ENCODE measurements at regions of chr14 and their contacts with region 1.

Region 1: DNA sequence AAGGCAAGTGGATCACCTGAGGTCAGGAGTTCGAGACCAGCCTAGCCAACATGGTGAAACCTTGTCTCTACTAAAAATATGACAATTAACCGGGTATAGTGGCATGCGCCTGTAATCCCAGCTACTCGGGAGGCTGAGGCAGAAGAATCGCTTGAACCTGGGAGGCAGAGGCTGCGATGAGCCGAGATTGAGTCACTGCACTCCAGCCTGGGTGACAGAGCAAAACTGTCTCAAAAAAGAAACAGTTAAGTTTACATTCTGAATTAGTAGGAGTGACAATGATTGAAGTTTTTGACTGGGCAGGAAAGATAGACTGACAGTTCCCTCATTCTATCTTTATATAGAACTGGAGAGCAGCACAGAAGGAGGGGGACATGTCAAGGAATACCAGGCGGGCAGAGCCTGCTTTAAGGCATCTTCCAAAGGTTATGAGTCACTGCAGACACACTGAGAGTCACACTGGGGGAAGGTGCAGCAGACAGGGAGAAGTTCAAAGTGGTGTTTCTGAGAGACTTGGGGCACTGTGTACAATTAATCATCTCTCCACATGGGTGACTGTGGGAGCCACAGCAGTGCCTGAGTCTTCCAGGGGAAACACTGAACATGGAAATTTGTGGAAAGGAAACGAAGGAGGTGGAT is 42.8 kb upstream of the RNASE3 start:
- DNase-seq: no peak
- H3K4me3 ChIP-seq: no peak overlapping the region
- H3K27ac ChIP-seq: no peak overlapping the region
- H3K4me1 ChIP-seq: no peaks in the 10 kb centered on the region
- H3K27me3 ChIP-seq: peaks cover under 1 to 11% of the 10 kb centered on the region in 2 experiments
- CTCF ChIP-seq: no peak
- POLR2A ChIP-seq: no peak

Region 2: GRCh38 chr14:20782280-20782890 is 66.0 kb before region 1 on chr14:
- CTCF ChIA-PET with region 1: interaction called, 3 read pairs
- POLR2A ChIA-PET with region 1: no interaction called
- dilution Hi-C with region 1: no loop called
- intact Hi-C with region 1: loop called (anchors 5 kb)
- DNase-seq: peak; percentile 56
- H3K4me3 ChIP-seq: peak overlapping the region in 1 of 3 experiments; percentile 35
- H3K27ac ChIP-seq: no peak overlapping the region
- H3K4me1 ChIP-seq: peaks cover 20% of the 10 kb centered on the region
- H3K27me3 ChIP-seq: peaks cover 2 to 9% of the 10 kb centered on the region in 2 experiments
- CTCF ChIP-seq: no peak
- POLR2A ChIP-seq: no peak

Region 3: GRCh38 chr14:20836668-20837338 is 11.6 kb before region 1 on chr14:
- CTCF ChIA-PET with region 1: interaction called, 10 read pairs
- POLR2A ChIA-PET with region 1: interaction called, 3 read pairs
- dilution Hi-C with region 1: no loop called
- intact Hi-C with region 1: no loop called
- DNase-seq: peak; percentile 47
- H3K4me3 ChIP-seq: no peak overlapping the region
- H3K27ac ChIP-seq: no peak overlapping the region
- H3K4me1 ChIP-seq: no peaks in the 10 kb centered on the region
- H3K27me3 ChIP-seq: no peaks in the 10 kb centered on the region
- CTCF ChIP-seq: peak; percentile 42 to 55
- POLR2A ChIP-seq: no peak

Region 4: DNA sequence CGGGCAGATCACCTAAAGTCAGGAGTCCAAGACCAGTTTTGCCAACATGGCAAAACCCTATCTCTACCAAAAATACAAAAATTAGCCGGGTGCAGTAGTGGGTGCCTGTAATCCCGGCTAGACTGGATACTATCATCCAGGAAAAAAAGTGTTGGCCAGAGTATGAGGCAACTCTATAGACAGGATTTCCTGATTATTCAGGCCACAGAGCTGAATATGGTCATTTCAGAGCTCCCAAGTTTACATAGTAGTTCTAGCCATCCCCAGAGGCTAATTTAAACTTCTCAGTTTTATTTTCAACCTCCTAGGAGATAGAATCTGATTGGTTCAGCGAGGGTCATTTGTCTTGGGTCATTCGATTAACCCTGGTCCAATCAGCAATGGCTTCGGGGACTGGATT is 438.7 kb after region 1 on chr14:
- CTCF ChIA-PET with region 1: no interaction called
- POLR2A ChIA-PET with region 1: no interaction called
- dilution Hi-C with region 1: no loop called
- intact Hi-C with region 1: no loop called
- DNase-seq: no peak
- H3K4me3 ChIP-seq: no peak overlapping the region
- H3K27ac ChIP-seq: no peak overlapping the region
- H3K4me1 ChIP-seq: no peaks in the 10 kb centered on the region
- H3K27me3 ChIP-seq: peaks cover 0 to 3% of the 10 kb centered on the region in 2 experiments
- CTCF ChIP-seq: no peak
- POLR2A ChIP-seq: no peak

Region 5: DNA sequence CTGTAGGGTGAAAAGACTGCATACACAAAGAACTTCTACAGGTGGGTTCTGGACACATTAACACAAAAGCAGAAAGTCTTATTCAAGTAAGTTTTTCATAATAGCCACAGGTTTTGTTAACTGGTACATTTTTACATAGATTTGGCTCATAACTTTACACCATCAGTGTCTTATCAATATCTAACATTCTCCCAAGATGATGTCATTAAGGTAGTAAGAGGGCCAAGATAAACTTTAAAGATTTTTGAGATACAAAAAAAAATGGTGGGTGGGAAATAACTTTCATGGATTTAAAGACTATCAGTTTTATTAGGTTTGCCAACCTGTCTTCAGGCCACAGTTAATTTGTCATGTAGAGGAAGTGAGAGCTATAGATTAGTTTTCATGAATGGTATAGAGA is 533.7 kb after region 1 on chr14:
- CTCF ChIA-PET with region 1: no interaction called
- POLR2A ChIA-PET with region 1: no interaction called
- dilution Hi-C with region 1: no loop called
- intact Hi-C with region 1: no loop called
- DNase-seq: no peak
- H3K4me3 ChIP-seq: peak overlapping the region in 1 of 3 experiments; percentile 68
- H3K27ac ChIP-seq: no peak overlapping the region
- H3K4me1 ChIP-seq: peaks cover 29% of the 10 kb centered on the region
- H3K27me3 ChIP-seq: no peaks in the 10 kb centered on the region
- CTCF ChIP-seq: no peak
- POLR2A ChIP-seq: no peak